Ascending aorta (tissue), 2 donors: ENCODE measurements at regions of chr1 and their contacts with region 1.

Region 1: GRCh38 chr1:201709564-201710295 is 119.2 kb upstream of the IPO9 start:
- DNase-seq: peak in 1 of 2 donors; percentile 86
- H3K4me3 ChIP-seq: no peak overlapping the region
- H3K27ac ChIP-seq: peak overlapping the region; percentile 93 to 97
- H3K4me1 ChIP-seq: peaks cover 33 to 47% of the 10 kb centered on the region in 2 donors
- H3K27me3 ChIP-seq: no peaks in the 10 kb centered on the region
- CTCF ChIP-seq: peak; percentile 91

Region 2: DNA sequence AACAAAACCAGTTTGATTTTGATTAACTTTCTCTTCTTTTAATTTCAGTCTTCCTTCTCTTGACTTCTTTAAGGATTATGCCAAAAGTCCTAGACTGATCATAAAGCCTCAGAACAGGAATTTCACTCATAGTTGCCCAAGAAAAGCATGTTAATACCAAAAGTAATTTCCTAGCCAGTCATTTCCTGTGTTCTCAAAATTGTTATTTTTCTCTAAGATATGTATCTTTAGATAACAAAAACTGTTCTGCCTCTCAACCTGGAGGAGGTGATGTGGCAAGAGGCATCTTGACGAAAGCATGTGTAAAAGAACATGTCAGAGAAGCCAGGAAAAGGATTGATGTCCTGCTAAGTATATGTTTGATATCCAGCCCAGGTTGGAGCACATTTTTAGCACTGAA is 41.2 kb after region 1 on chr1:
- intact Hi-C with region 1: loop called (anchors 2 kb)
- DNase-seq: peak in 1 of 2 donors; percentile 78
- H3K4me3 ChIP-seq: no peak overlapping the region
- H3K27ac ChIP-seq: peak overlapping the region; percentile 97 to 98
- H3K4me1 ChIP-seq: peaks cover 37 to 92% of the 10 kb centered on the region in 2 donors
- H3K27me3 ChIP-seq: no peaks in the 10 kb centered on the region
- CTCF ChIP-seq: no peak